PC-9 (cell line): ENCODE measurements at regions of chr3 and their contacts with region 1.

Region 1: GRCh38 chr3:78659386-78659987 is 1108.3 kb downstream of the ROBO1 start:
- DNase-seq: peak in 1 of 2 experiments; percentile 11
- H3K4me3 ChIP-seq: no peak overlapping the region
- H3K27ac ChIP-seq: no peak overlapping the region
- H3K4me1 ChIP-seq: no peaks in the 10 kb centered on the region
- H3K27me3 ChIP-seq: no peaks in the 10 kb centered on the region
- CTCF ChIP-seq: peak; percentile 86

Region 2: GRCh38 chr3:78978037-78978436 is 318.6 kb after region 1 on chr3:
- CTCF ChIA-PET with region 1: no interaction called
- POLR2A ChIA-PET with region 1: no interaction called
- intact Hi-C with region 1: loop called (anchors 5 kb)
- DNase-seq: no peak
- H3K4me3 ChIP-seq: no peak overlapping the region
- H3K27ac ChIP-seq: no peak overlapping the region
- H3K4me1 ChIP-seq: no peaks in the 10 kb centered on the region
- H3K27me3 ChIP-seq: no peaks in the 10 kb centered on the region
- CTCF ChIP-seq: peak; percentile 55

Region 3: DNA sequence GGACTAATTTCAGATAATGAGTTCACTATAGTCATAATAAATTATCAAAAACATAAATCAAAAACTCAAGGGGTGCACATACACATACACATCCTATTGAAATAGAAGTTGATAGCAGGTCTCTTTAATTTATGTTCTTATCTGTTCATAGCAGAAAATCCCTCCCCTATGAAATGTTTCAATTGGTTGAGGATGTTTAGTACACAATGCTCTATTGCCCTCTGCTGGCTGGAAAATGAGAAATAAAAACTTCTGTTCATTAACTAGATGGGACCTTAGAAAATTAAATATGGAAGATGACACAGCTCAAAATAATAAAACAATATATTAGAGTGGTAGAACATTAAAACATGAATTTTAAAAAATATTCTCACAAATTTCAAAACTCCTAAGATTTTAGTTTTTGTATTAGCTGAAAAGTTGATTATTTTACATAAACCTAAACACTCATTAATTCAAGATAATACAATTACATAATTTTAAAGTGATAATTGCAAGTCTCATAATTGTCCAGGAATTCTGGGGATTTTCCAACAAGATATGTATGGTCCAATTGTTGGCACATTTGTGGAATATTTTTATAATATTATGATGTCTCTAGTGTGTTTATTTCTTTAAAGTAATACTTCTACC is 373.3 kb after region 1 on chr3:
- CTCF ChIA-PET with region 1: no interaction called
- POLR2A ChIA-PET with region 1: no interaction called
- intact Hi-C with region 1: loop called (anchors 1 kb)
- DNase-seq: no peak
- H3K4me3 ChIP-seq: no peak overlapping the region
- H3K27ac ChIP-seq: no peak overlapping the region
- H3K4me1 ChIP-seq: no peaks in the 10 kb centered on the region
- H3K27me3 ChIP-seq: no peaks in the 10 kb centered on the region
- CTCF ChIP-seq: peak; percentile 81

Region 4: GRCh38 chr3:79361748-79362378 is 702.4 kb after region 1 on chr3:
- CTCF ChIA-PET with region 1: no interaction called
- POLR2A ChIA-PET with region 1: no interaction called
- intact Hi-C with region 1: loop called (anchors 2 kb)
- DNase-seq: no peak
- H3K4me3 ChIP-seq: no peak overlapping the region
- H3K27ac ChIP-seq: no peak overlapping the region
- H3K4me1 ChIP-seq: no peaks in the 10 kb centered on the region
- H3K27me3 ChIP-seq: no peaks in the 10 kb centered on the region
- CTCF ChIP-seq: peak; percentile 74

Region 5: GRCh38 chr3:79497447-79498111 is 838.1 kb after region 1 on chr3:
- CTCF ChIA-PET with region 1: no interaction called
- POLR2A ChIA-PET with region 1: no interaction called
- intact Hi-C with region 1: loop called (anchors 5 kb)
- DNase-seq: no peak
- H3K4me3 ChIP-seq: no peak overlapping the region
- H3K27ac ChIP-seq: no peak overlapping the region
- H3K4me1 ChIP-seq: no peaks in the 10 kb centered on the region
- H3K27me3 ChIP-seq: no peaks in the 10 kb centered on the region
- CTCF ChIP-seq: peak; percentile 84

Region 6: DNA sequence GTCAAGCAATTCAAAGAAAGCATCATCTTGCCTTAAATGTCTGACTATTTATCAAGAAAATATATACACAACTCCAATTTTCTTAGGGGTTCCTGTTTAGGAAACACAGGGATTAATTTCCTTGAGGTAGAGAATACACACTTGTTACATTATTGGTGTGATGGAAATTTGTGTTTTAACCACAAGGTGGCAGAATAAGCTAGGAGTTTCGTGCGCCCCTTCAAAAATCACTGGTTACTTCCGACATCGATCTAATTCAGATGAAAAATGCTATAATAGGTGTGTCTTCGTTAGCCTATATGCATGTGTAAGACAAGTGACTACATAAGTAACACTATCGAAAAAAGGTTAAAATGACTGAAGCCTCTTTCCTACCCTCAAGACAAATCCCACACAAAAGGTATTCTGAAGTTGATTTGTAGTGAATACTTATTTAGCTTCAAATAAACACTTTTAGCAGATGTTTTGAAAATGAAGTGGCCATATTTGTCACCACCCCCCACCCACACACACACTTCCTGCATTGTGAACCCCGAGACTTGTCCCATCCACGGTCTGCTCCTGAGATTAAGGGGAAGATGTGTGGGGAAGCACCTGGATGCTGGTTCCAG is 861.9 kb after region 1 on chr3:
- CTCF ChIA-PET with region 1: no interaction called
- POLR2A ChIA-PET with region 1: no interaction called
- intact Hi-C with region 1: loop called (anchors 1 kb)
- DNase-seq: peak; percentile 17 to 38
- H3K4me3 ChIP-seq: no peak overlapping the region; the same call in 1 of the 2 replicates
- H3K27ac ChIP-seq: no peak overlapping the region
- H3K4me1 ChIP-seq: no peaks in the 10 kb centered on the region
- H3K27me3 ChIP-seq: no peaks in the 10 kb centered on the region
- CTCF ChIP-seq: peak; percentile 79